ENCODE measurements at regions of chr18 and their contacts with region 1.

Region 1: DNA sequence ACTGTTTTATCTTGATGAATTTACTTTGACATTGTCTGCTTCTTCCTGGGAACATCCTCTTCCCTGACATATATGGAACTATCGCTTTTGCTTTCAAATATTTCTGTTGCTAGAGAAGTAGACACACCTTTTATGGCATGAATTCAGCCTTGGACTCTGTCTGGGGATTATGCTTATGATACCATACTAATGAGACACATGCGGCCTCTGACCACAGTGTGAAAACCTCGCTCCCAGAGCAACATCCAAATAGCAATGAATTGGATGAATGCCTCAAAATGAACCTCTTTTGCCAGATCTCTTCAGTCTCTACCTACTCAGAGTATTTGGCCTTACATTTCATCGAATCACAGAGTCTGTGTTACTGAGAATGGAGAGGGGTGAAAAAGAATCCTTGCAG is 70.9 kb downstream of the PIEZO2 start:
- DNase-seq: no peak
- ATAC-seq: no peak
- H3K4me3 ChIP-seq: no peak overlapping the region
- H3K27ac ChIP-seq: no peak overlapping the region
- H3K4me1 ChIP-seq: no peaks in the 10 kb centered on the region
- H3K27me3 ChIP-seq: peaks cover 0 to 4% (median 0%) of the 10 kb centered on the region in 7 donors
- CTCF ChIP-seq: no peak

Region 2: GRCh38 chr18:10798727-10799308 is 279.7 kb before region 1 on chr18:
- intact Hi-C with region 1: loop called in 1 of 10 experiments (anchors 5 kb)
- DNase-seq: no peak
- ATAC-seq: peak in 1 of 8 donors; percentile 59
- H3K4me3 ChIP-seq: no peak overlapping the region
- H3K27ac ChIP-seq: no peak overlapping the region
- H3K4me1 ChIP-seq: peaks cover 0 to 6% (median 0%) of the 10 kb centered on the region in 9 donors
- H3K27me3 ChIP-seq: no peaks in the 10 kb centered on the region
- CTCF ChIP-seq: no peak

Region 3: DNA sequence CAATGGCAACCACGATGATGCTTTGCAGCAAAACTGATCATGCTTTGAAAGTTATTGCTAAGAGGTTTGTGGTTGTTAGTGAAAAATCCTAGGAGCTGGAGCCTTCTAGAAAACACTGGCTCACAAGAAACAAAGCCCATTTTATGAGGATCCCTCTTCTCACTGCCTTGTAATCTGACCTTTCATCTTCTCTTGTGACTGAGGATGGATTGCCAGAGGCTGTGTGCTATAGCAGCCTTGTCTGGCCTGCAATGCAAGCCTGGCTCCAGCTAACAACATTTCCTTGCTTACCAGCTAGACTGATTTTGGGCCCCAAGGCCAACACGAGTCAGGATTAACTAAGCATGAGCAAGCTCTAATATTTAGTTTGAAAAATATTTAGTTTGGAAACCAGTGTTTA is 57.8 kb after region 1 on chr18:
- intact Hi-C with region 1: loop called in 1 of 10 experiments (anchors 10 kb)
- DNase-seq: no peak
- ATAC-seq: no peak
- H3K4me3 ChIP-seq: no peak overlapping the region
- H3K27ac ChIP-seq: no peak overlapping the region
- H3K4me1 ChIP-seq: no peaks in the 10 kb centered on the region
- H3K27me3 ChIP-seq: peaks cover 0 to 26% (median 0%) of the 10 kb centered on the region in 7 donors
- CTCF ChIP-seq: no peak

Region 4: DNA sequence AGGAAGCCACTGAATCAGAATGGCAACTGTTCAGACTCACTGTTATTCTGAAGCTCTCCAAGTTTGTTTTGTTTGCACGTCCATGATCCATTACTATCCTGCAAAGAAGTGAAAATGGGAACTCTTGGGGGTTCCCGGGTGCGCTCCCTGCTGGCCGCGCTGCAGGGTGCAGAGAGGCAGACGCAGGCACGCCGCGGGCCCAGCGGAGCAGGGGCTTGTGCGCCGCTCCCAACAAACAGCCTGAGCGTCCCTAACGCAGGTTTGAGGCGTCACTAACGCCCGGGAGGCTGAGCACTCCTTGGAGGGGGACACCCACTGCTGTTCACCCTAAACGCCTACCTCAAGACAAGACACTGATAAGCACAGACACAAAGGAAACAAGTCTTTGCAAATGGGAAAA is 85.2 kb after region 1 on chr18:
- intact Hi-C with region 1: no loop called
- DNase-seq: peak in 1 of 2 donors; percentile 32
- ATAC-seq: peak in 4 of 8 donors; percentile 53 to 69 (median 55)
- H3K4me3 ChIP-seq: no peak overlapping the region
- H3K27ac ChIP-seq: no peak overlapping the region
- H3K4me1 ChIP-seq: no peaks in the 10 kb centered on the region
- H3K27me3 ChIP-seq: peaks cover 0 to 40% (median 10%) of the 10 kb centered on the region in 7 donors
- CTCF ChIP-seq: peak in 7 of 9 donors; percentile 42 to 66 (median 52)

Region 5: GRCh38 chr18:11246495-11247300 is 168.2 kb after region 1 on chr18:
- intact Hi-C with region 1: no loop called
- DNase-seq: no peak
- ATAC-seq: peak in 1 of 8 donors; percentile 25
- H3K4me3 ChIP-seq: no peak overlapping the region
- H3K27ac ChIP-seq: no peak overlapping the region
- H3K4me1 ChIP-seq: peaks cover 0 to 3% (median 0%) of the 10 kb centered on the region in 9 donors
- H3K27me3 ChIP-seq: no peaks in the 10 kb centered on the region
- CTCF ChIP-seq: no peak